GM13977 (cell line): ENCODE measurements at regions of chr4 and their contacts with region 1.

Region 1: DNA sequence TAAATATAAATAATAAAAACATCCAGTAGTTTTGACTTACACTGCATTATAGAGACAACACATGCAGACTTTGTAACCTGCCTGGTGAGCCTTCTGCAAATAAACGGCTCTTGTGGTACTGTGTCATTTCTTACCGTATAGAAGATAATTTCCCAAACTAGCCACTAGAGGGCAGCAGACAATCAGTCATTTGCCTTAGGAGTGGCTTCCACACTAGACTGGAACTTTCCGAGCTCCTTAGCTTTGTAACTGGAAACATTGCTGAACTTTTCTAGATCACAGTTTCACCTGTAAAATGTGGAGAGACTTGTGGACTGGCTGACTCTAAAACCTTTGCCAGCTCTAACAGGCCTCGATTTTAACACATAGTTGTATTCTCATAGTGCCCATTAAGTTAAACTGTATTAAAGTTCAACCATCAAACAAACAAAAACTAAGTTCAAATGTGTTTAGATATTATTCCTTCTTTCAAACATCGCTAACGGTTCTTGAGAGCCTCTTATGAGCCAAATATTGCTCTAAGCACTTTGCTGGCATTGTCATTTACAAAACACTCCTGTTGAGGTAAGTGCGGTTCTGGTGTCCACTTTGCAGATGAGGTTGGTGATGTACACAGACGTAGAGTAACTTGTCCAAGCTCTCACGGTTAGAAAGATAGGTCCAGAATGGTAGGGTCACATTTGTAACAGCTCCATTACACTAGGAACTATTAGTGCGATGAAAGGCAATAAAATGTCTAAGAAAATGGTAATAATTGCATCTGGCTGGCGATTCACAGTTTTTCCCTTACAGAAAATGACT is 345.5 kb downstream of the ANK2 start:
- DNase-seq: peak; percentile 37
- CTCF ChIP-seq: peak; percentile 64

Region 2: DNA sequence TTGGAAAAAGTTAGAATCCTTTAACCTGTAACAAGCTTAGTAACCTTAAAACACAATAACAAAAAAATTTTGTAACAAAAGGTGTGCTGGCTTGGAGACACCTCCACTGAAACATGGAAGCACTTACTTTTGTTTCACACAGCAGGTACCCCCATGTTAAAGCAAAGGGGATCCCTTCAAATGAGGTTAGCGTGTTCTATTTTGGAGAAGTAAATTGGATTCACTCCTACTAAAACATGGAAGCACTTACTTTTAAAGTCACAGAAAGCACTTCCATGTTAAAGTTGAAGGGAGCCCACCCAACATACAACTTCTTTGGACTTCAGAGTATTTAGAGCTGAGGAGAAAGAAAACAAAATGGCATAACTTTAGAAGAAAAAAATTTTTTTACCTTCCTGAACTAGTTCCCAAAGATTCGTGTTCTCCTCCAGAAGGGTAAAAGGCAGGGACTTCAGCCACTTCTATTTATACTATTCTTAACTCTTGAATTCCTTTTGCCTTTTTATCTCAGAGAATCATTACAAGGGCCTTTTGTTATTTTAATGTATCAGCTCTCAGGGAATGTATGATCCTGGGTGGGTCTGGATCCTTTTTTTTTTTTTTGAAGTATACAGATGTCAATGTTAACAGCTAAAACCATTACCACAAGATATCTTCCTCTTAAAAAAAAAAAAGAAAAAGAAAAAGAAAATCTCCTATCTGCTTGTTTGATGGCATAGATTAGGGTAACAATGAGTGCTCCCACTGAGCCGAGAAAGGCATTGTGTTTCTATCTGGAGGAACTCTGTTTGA is 746.5 kb before region 1 on chr4:
- in situ Hi-C with region 1: no loop called
- DNase-seq: no peak
- CTCF ChIP-seq: no peak

Region 3: DNA sequence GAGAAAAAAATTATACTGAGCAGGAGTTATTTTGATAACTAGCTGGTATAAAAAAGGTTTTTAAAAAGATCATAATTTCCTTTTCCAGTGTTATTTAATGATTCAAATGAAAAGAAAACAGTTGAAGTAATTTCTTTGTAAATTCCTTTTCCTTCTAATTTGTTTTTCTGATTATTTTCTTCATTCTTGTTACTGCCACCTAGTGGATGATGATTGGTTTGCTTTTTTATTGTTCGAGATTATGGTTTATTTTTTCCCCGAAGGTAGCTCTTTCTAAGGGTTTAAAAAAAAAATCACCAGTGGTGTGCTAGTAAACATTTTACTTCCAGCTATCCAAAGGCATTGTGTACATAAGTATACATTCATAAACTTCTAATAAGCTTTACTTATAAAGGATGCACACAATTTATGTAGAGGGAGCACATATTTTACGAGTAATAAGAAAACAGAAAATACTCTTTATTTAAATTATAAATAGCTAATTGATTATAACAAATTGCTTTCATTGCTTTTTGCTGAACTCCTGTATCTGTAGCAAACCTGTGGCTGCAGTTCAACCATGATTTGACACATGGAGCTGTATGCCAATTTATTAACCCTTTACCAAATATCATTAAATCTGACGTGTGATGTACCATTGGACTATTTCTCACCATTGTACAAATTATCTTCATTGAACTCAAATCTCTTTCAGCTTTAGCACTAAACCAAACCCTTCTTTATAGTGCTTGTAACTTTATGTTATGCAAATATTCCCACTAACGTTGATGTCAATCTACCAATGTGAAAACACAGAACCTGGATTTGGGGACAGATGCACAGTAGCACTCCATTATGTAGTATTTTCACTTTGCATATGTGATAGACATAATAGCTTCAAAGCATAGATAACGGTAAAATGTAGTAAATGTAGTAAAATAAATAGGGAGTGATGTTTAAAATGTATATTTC is 443.3 kb before region 1 on chr4:
- in situ Hi-C with region 1: no loop called
- DNase-seq: no peak
- CTCF ChIP-seq: peak; percentile 44

Region 4: DNA sequence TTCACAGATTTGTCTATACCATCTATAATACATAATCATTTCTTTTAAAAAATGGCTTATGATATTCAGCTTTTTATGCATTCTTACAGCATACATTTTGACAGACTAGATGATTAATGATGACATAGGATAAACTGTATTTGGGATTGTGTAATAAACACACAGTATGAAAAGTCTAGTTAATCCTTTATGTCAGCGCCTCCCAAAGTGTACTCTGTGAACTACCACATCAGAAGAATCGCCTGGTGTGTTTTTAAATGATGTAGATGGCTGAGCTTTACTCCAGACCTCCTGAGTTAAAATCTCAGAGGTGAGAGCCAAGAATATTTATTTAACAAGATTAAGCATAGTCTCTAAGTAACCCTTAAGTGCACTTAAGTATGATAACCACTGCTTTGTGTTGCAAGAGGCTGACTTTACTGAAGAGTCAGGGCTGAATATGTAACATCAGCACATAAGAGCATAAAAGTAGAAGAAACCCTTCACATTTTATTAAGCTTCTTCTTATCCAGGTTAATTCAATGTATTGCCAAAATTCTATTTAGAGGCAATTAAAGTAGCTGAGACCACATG is 241.3 kb before region 1 on chr4:
- in situ Hi-C with region 1: no loop called
- DNase-seq: no peak
- CTCF ChIP-seq: no peak

Region 5: DNA sequence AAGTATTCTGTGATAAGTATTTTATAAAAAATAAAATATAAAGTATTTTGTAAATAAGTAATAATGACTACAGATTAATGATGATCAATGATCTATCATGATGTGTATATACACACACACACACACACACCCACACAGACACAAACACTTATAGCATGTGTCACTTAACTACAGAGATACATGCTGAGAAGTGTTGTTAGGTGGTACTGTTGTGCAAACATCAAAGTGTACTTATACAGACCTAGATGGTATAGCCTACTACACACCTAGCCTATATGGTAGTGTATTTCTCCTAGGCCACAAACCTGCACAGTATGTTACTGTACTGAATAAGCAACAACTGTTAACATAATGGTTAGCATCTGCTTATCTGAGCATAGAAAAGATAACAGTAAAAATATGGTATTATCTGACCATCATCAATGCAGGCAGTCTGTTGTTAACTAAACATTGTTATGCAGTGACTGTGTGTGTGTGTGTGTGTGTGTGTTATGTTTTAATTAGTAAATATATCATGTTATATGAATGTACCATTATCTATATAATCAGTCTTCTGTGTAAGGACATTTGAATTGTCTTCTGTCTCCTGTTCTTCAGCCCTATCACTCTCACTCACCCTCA is 228.5 kb after region 1 on chr4:
- in situ Hi-C with region 1: no loop called
- DNase-seq: no peak
- CTCF ChIP-seq: no peak

Region 6: GRCh38 chr4:113761620-113762185 is 366.8 kb after region 1 on chr4 and contains the start of gene CAMK2D:
- in situ Hi-C with region 1: loop called (anchors 25 kb)
- DNase-seq: peak; percentile 82
- CTCF ChIP-seq: peak; percentile 86

Region 7: DNA sequence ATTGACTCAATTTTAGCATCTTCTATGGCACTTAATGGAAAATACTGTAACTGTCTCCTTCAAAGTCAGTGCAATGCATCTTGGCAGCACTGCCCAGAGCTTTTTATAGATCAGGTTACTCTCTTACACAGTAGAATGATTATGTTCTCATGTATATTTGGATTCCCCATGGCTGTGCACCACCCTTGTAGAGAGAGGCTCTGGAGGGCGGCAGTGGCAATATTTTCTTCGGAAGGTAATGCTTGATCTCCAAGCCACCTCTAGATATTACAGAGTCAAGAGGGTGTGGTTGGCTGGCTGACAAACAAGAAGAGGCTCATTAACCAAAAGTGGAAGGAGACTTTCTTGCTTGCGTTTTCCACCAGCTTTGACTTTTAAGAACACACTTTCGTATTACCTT is 657.3 kb after region 1 on chr4:
- in situ Hi-C with region 1: loop called (anchors 25 kb)
- DNase-seq: no peak
- CTCF ChIP-seq: no peak

Region 8: GRCh38 chr4:114386637-114387233 is 991.8 kb after region 1 on chr4:
- in situ Hi-C with region 1: loop called (anchors 25 kb)
- DNase-seq: peak; percentile 30
- CTCF ChIP-seq: peak; percentile 74